ENCODE measurements at regions of chr1 and their contacts with region 1.

Region 1: DNA sequence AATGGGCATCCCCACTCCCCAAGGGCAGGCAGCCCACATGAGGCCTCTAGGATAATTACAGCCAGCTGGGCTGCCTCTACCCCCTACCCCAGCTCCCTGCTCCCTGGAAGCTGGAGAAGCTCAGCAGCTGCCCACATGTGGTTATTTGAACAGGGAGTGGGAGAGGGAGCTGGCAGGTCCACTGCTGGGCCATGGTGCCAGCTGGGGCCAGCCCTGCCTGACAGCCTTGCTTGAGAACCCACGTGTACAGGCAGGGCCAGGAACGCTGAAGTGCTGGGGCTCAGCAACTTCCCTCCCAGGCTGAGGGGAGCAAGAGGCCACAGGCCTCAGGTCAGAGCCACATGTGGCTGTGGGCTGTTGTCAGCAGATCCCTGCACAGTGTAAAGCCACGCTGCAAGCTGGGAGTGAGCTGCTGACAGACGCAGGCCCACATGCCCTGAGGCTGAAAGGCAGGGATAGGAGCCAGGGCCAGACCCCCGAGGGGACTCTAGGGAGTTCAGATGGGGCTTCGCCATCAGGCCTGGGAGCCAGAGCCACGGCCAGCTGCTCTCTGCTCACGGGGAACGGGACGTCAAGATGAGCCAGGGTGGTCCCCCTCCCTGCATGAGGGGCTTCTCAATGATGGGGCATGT is 129.0 kb downstream of the SYF2 start:
- DNase-seq: no peak
- H3K4me3 ChIP-seq: no peak overlapping the region
- H3K27ac ChIP-seq: no peak overlapping the region
- H3K4me1 ChIP-seq: no peaks in the 10 kb centered on the region
- H3K27me3 ChIP-seq: peaks cover 0 to 59% of the 10 kb centered on the region in 2 donors
- CTCF ChIP-seq: no peak

Region 2: GRCh38 chr1:24301785-24302175 is 801.5 kb before region 1 on chr1:
- intact Hi-C with region 1: no loop called
- DNase-seq: peak in 1 of 2 donors; percentile 39
- H3K4me3 ChIP-seq: no peak overlapping the region
- H3K27ac ChIP-seq: no peak overlapping the region
- H3K4me1 ChIP-seq: no peaks in the 10 kb centered on the region
- H3K27me3 ChIP-seq: peaks cover 0 to 25% of the 10 kb centered on the region in 2 donors
- CTCF ChIP-seq: no peak

Region 3: DNA sequence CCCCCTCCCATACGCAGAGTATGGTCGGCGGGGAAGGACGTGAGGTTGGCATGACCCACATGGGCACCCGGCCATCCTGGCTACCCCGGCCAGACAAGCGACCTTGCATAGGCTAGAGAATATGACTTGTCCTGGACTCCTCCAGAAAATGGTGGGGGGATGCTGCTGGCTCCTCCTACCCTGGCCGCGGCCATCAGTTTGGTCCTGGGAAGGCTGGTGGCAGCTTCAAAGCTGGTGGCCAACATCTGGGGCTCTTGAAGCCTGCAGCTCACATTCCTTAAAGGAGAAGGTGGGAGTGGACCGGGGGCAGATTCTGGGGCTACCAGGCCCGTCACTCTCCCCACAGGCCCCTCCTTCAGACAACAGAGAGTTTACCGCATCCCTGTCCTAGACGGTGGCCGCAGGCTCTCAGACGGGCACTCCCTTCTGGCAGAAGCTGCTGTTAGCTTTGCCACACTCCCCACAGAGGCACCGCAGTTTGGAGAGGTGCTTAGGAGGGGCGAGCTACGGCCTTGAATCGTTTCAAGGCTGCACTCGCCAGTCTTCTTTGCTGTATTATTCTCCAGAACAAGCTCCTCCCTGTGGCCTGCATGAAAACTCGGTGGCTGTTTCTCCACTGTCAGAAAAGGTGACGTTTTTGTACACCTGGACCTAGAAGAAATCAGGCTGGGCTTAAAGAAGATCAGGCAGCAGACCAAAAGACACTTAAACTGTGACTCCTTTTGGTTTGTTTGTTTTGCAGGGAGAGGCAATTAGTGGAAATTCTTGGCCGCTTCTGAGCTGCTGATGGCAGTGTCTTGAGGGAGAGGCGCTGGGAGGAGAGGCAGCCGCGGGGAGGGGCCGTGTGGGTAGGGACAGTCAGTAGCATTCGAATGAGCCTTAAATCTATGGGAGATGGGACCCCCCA is 241.2 kb before region 1 on chr1:
- intact Hi-C with region 1: loop called (anchors 10 kb)
- DNase-seq: peak in 1 of 2 donors; percentile 54
- H3K4me3 ChIP-seq: no peak overlapping the region
- H3K27ac ChIP-seq: no peak overlapping the region
- H3K4me1 ChIP-seq: no peaks in the 10 kb centered on the region
- H3K27me3 ChIP-seq: peaks cover 0 to 59% of the 10 kb centered on the region in 2 donors
- CTCF ChIP-seq: no peak

Region 4: DNA sequence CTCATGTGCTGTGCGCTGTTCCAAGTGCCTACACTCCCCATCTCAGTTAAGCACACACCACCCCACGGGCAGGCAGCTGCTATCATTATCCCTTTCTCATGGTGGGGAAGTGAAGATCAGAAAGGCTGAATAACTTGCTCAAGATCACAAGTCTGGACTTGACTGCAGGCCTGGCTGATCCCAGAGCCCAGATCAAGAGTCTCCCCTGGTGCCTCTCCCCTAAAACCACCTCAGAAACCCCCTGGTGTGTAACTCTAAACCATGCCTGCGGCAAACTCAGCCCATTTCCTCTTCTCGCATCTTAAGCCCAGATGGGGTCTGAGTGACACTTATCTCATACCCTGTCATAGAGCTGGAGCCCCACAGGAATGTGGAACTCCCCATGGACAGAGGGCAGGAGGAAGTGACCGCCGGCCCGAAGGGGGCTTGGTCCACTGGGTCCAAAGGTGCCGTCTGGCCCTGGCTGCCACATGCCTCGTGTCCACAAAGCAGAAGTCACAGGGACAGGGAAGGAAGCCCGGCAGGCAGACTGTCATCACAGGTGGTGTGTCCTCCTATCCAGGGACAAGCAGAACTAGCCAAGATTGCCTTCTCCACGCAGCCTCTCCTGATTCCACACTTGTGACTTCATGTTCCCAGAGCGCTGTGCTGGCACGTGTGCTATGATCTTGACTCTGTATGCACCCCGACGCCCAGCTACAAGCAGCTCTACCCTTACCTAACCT is 37.0 kb after region 1 on chr1:
- intact Hi-C with region 1: no loop called
- DNase-seq: peak in 1 of 2 donors; percentile 48
- H3K4me3 ChIP-seq: no peak overlapping the region
- H3K27ac ChIP-seq: no peak overlapping the region
- H3K4me1 ChIP-seq: peaks cover 0 to 7% (median 0%) of the 10 kb centered on the region in 4 donors
- H3K27me3 ChIP-seq: peaks cover 0 to 54% of the 10 kb centered on the region in 2 donors
- CTCF ChIP-seq: no peak

Measured in tibial artery (tissue), 4 donors.